ENCODE measurements at regions of chr7 and their contacts with region 1.

Region 1: GRCh38 chr7:75914730-75915585 is at the start of gene POR:
- DNase-seq: peak; percentile 95
- H3K4me3 ChIP-seq: peak within 1 kb of the TSS; percentile 99
- H3K27ac ChIP-seq: peak within 1 kb of the TSS; percentile 81
- H3K4me1 ChIP-seq: peaks cover 4% of the 10 kb centered on the region
- H3K27me3 ChIP-seq: no peaks in the 10 kb centered on the region
- CTCF ChIP-seq: no peak
- total RNA-seq, gene POR: 99.3 and 104 TPM in 2 replicates

Region 2: GRCh38 chr7:75937958-75938786 is 23.2 kb after region 1 on chr7:
- CTCF ChIA-PET with region 1: no interaction called
- POLR2A ChIA-PET with region 1: no interaction called
- intact Hi-C with region 1: loop called (anchors 2 kb)
- DNase-seq: peak; percentile 23
- H3K4me3 ChIP-seq: no peak overlapping the region
- H3K27ac ChIP-seq: no peak overlapping the region
- H3K4me1 ChIP-seq: peaks cover 4% of the 10 kb centered on the region
- H3K27me3 ChIP-seq: no peaks in the 10 kb centered on the region
- CTCF ChIP-seq: no peak